HepG2 (cell line): ENCODE measurements at regions of chr2 and their contacts with region 1.

Region 1: GRCh38 chr2:4338345-4338744 is 635.0 kb downstream of the DCDC2C start:
- DNase-seq: no peak
- ATAC-seq: no peak
- H3K4me3 ChIP-seq: no peak overlapping the region
- H3K27ac ChIP-seq: no peak overlapping the region
- H3K4me1 ChIP-seq: no peaks in the 10 kb centered on the region
- H3K27me3 ChIP-seq: no peaks in the 10 kb centered on the region; a peak in 1 of 5 replicates
- CTCF ChIP-seq: no peak
- EP300 ChIP-seq: no peak
- POLR2A ChIP-seq: no peak
- RAD21 ChIP-seq: no peak

Region 2: GRCh38 chr2:4265936-4266335 is 72.4 kb before region 1 on chr2:
- CTCF ChIA-PET with region 1: no interaction called
- POLR2A ChIA-PET with region 1: no interaction called
- in situ Hi-C with region 1: no loop called
- intact Hi-C with region 1: loop called (anchors 2 kb)
- DNase-seq: no peak
- ATAC-seq: no peak
- H3K4me3 ChIP-seq: no peak overlapping the region
- H3K27ac ChIP-seq: no peak overlapping the region
- H3K4me1 ChIP-seq: no peaks in the 10 kb centered on the region
- H3K27me3 ChIP-seq: no peaks in the 10 kb centered on the region
- CTCF ChIP-seq: no peak
- EP300 ChIP-seq: no peak
- POLR2A ChIP-seq: no peak
- RAD21 ChIP-seq: no peak